H1 (cell line): ENCODE measurements at regions of chr9 and their contacts with region 1.

Region 1: GRCh38 chr9:92242260-92243136 is 51.0 kb downstream of the IARS1 start:
- DNase-seq: no peak
- H3K4me3 ChIP-seq: no peak overlapping the region
- H3K27ac ChIP-seq: no peak overlapping the region
- H3K4me1 ChIP-seq: no peaks in the 10 kb centered on the region
- H3K27me3 ChIP-seq: no peaks in the 10 kb centered on the region
- CTCF ChIP-seq: peak in 2 of 3 experiments; percentile 34 to 39; a peak in 3 of 4 replicates
- EP300 ChIP-seq: no peak
- POLR2A ChIP-seq: no peak
- RAD21 ChIP-seq: peak; percentile 29 to 57

Region 2: GRCh38 chr9:91837981-91838731 is 404.3 kb before region 1 on chr9:
- CTCF ChIA-PET with region 1: no interaction called
- POLR2A ChIA-PET with region 1: no interaction called
- DNase-seq: no peak
- H3K4me3 ChIP-seq: no peak overlapping the region
- H3K27ac ChIP-seq: no peak overlapping the region
- H3K4me1 ChIP-seq: peaks cover 0 to 13% (median under 1%) of the 10 kb centered on the region in 4 experiments; a peak in 4 of 7 replicates
- H3K27me3 ChIP-seq: no peaks in the 10 kb centered on the region
- CTCF ChIP-seq: no peak
- EP300 ChIP-seq: no peak
- POLR2A ChIP-seq: no peak
- RAD21 ChIP-seq: no peak

Region 3: GRCh38 chr9:91865041-91865440 is 377.5 kb before region 1 on chr9:
- CTCF ChIA-PET with region 1: no interaction called
- POLR2A ChIA-PET with region 1: no interaction called
- DNase-seq: no peak
- H3K4me3 ChIP-seq: no peak overlapping the region
- H3K27ac ChIP-seq: no peak overlapping the region
- H3K4me1 ChIP-seq: no peaks in the 10 kb centered on the region
- H3K27me3 ChIP-seq: no peaks in the 10 kb centered on the region
- CTCF ChIP-seq: no peak
- EP300 ChIP-seq: no peak
- POLR2A ChIP-seq: no peak
- RAD21 ChIP-seq: no peak

Region 4: DNA sequence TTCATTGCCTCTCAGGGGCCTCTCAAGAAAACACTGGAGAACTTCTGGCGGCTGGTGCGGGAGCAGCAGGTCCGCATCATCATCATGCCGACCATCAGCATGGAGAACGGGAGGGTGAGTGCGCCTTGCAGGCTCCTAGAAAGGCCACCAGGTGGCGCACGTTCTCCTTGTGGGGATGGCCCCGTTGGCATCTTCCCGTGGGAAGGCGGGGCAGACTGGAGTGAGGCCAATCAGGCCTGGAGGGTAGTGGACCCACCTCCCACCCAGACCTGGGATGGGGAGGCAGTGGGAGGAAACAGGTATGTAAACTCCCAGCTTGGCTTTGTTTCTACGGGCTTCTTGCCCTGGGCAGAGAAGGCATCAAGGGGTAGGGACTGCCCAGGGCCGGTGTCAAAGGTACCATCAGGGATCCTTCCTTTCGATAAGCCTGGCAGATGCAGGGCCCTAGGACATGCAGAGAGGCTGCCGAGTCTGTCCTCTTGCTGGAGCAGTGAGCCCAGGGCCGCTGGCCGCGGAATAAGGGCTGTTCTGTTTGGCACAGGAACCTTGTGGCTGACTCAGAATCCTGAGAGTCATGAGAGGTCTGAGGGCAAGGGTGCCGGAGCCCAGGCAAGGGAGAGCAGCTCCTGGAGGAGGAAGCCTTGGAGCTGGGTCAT is 108.4 kb before region 1 on chr9:
- CTCF ChIA-PET with region 1: interaction called, 116 read pairs
- POLR2A ChIA-PET with region 1: no interaction called
- DNase-seq: peak; percentile 85 to 96
- H3K4me3 ChIP-seq: peak overlapping the region in 1 of 4 experiments; percentile 11; a peak in 3 of 8 replicates
- H3K27ac ChIP-seq: no peak overlapping the region
- H3K4me1 ChIP-seq: peaks cover 0 to 7% (median 2%) of the 10 kb centered on the region in 4 experiments; a peak in 3 of 7 replicates
- H3K27me3 ChIP-seq: no peaks in the 10 kb centered on the region
- CTCF ChIP-seq: peak; percentile 81 to 97 (median 94)
- EP300 ChIP-seq: no peak
- POLR2A ChIP-seq: no peak
- RAD21 ChIP-seq: peak; percentile 73 to 83